ENCODE measurements at regions of chr2 and their contacts with region 1.

Region 1: GRCh38 chr2:176121190-176122051 is 1.1 kb upstream of the HOXD9 start:
- DNase-seq: no peak
- ATAC-seq: no peak
- H3K4me3 ChIP-seq: no peak overlapping the region
- H3K27ac ChIP-seq: no peak overlapping the region
- H3K4me1 ChIP-seq: peaks cover 0 to 5% of the 10 kb centered on the region in 2 experiments; a peak in 1 of 4 replicates
- H3K27me3 ChIP-seq: no peaks in the 10 kb centered on the region
- CTCF ChIP-seq: no peak
- POLR2A ChIP-seq: no peak
- RAD21 ChIP-seq: no peak

Region 2: DNA sequence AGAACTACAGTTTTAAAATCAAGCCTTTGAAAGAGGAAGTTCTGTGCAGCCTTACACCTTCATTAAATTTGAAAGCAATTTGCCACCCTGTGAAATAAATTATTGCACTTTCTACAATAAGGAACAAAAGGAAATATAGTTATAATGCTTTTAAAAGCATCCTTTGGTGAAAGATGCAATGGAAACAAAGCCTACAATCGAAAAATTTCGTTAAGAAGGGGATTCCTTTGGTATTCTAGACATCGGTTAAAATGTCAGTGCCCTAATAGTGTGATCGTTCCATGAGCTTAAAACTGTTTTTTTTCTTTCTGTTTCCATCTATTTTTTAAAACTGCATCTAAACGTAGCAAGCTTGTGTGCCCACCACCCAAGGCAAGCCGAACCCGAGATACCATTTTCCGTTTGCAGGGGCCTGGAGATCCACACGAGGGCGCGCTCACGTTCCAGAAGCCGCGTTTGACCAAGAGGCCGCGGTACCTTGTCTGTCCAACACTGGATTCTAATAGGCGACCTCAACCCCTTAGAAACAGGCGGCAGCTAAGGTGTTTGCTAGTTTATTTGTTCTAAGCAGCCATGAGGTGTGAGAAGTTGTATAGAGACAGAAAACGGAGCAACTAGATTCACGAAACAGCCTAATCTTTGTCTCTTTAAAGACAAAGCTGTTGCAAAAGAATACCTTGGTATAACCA is 10.3 kb before region 1 on chr2:
- CTCF ChIA-PET with region 1: interaction called, 11 read pairs
- POLR2A ChIA-PET with region 1: no interaction called
- RAD21 ChIA-PET with region 1: no interaction called
- intact Hi-C with region 1: no loop called
- DNase-seq: no peak
- ATAC-seq: peak; percentile 82
- H3K4me3 ChIP-seq: no peak overlapping the region
- H3K27ac ChIP-seq: no peak overlapping the region
- H3K4me1 ChIP-seq: peaks cover 0 to 18% of the 10 kb centered on the region in 2 experiments; a peak in 1 of 4 replicates
- H3K27me3 ChIP-seq: no peaks in the 10 kb centered on the region
- CTCF ChIP-seq: peak; percentile 73 to 88 (median 86)
- POLR2A ChIP-seq: no peak
- RAD21 ChIP-seq: peak; percentile 60